ENCODE measurements at regions of chr4 and their contacts with region 1.

Region 1: DNA sequence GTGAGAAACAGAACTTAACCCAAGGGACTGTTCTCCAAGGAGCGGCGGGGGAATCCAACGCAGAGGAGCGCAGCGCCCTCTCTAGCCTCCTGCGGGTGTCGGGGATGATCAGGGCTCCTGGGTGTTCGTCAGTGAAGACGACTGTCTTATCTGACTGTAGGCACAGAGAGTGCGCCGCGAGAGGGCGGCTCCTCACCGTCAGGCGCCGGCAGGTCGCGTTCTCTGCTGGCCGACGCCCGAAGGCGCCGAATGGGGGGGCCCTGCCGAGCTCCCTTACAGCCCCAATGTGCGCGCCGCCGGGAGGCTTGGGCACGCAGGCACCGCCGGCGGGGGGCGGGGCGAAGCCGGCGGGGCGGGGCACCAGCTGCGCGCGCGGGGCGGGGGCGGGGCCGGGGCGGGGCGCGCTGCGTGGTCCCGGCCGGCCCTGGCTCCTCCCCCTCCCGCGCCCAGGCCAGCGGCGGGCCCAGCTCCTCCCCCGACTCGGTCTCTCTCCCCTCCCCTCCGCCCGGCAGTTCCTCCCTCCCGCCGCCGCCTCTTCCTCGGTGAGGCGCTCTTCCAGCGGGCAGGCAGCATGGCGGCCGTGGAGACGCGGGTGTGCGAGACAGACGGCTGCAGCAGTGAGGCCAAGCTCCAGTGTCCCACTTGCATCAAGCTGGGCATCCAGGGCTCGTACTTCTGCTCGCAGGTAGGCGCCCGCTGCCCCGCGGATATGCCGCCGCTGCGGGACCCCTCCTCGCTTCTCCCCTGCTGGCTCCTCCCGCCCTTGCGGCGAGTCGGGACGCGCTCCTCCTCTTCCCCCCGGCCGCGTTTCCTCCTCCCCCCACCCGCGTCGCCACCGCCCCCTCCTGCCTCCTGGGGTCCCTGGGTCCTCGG is at the start of gene METAP1:
- DNase-seq: peak; percentile 91
- H3K4me3 ChIP-seq: peak within 1 kb of the TSS; percentile 64 to 93 (median 73)
- H3K27ac ChIP-seq: peak within 1 kb of the TSS; percentile 44
- H3K4me1 ChIP-seq: peaks cover 6% of the 10 kb centered on the region
- H3K27me3 ChIP-seq: no peaks in the 10 kb centered on the region
- CTCF ChIP-seq: peak; percentile 39 to 68
- POLR2A ChIP-seq: peak; percentile 81
- total RNA-seq, gene METAP1: 38.8 and 39.8 TPM in 2 replicates

Region 2: DNA sequence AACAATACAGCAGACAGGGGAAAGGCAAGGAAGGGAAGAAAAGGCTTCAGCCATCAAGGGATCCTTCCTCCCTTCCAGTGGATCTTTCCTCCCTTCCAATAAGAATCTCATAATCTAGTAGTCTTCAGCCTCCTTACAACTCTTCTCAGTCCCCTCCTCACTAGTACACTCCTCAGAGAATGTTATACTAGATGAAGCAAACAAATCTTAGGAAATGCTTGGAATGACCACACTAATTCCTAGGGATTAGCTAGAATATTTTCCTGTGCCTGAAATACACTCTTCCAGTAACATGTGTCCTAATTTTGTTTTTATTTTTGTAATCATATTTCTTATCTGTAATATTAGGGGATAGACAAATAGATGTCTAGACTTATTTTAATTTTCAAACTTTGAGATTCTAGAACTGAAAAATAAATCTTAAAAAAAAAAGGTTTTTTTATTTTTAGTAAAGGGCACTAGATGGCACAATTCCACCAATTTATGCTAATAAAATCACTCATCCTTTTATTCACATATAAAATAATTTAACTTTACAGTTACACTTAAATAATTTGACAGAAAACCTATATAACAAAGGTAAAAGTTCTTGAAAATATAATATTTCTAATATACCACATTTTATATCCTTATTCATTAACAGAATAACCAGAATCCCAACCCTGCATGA is 845.2 kb before region 1 on chr4:
- CTCF ChIA-PET with region 1: interaction called, 3 read pairs
- POLR2A ChIA-PET with region 1: no interaction called
- dilution Hi-C with region 1: no loop called
- intact Hi-C with region 1: loop called (anchors 5 kb)
- DNase-seq: no peak
- H3K4me3 ChIP-seq: no peak overlapping the region
- H3K27ac ChIP-seq: no peak overlapping the region
- H3K4me1 ChIP-seq: peaks cover 6% of the 10 kb centered on the region
- H3K27me3 ChIP-seq: peaks cover 0 to 3% of the 10 kb centered on the region in 2 experiments
- CTCF ChIP-seq: no peak
- POLR2A ChIP-seq: no peak

Region 3: GRCh38 chr4:98612318-98613250 is 382.8 kb before region 1 on chr4:
- CTCF ChIA-PET with region 1: no interaction called
- POLR2A ChIA-PET with region 1: no interaction called
- dilution Hi-C with region 1: no loop called
- intact Hi-C with region 1: no loop called
- DNase-seq: no peak
- H3K4me3 ChIP-seq: no peak overlapping the region
- H3K27ac ChIP-seq: no peak overlapping the region
- H3K4me1 ChIP-seq: peaks cover 4% of the 10 kb centered on the region
- H3K27me3 ChIP-seq: no peaks in the 10 kb centered on the region
- CTCF ChIP-seq: no peak
- POLR2A ChIP-seq: no peak

Region 4: DNA sequence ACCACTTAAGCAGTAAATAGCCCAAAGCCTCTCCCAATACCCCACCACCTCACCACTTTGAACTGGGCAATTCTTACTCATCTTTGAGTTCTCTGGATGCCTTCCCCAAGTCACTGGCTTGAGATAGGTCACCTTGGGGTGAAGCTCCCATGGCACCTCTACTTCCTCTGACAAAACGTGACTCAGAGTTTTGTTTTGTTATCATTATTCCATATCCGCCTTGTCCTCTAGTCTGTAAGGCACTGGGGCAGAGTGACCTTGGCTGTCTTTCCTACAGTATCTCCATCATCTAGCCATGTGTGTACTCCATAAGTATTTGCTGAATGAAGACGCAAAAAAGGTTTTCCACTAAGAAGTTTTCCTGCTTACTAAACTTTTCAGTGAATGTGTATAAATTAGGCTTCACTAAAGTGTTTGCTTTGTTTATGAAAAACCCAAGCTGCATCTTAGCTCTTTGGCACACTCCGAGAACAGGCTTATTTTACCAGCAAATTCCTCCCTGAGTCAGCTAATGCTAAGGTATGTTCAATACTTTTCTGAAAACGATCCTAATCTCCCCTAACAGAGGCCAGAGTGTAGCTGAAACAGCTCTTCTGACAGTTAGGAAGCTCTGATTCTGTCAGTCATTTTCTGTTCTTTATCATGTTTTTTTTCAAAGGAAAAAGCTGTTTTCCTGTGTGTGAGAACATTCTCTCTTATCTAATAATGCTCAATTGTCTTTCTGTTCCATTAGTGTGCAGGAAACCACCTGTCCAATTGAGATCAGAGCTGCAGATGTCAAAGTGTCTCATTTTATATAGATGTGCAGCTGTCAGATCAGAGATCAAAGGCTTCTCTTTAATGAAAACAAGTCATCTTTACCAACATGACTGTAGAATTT is 306.8 kb before region 1 on chr4:
- CTCF ChIA-PET with region 1: interaction called, 6 read pairs
- POLR2A ChIA-PET with region 1: no interaction called
- dilution Hi-C with region 1: no loop called
- intact Hi-C with region 1: loop called (anchors 10 kb)
- DNase-seq: peak; percentile 90
- H3K4me3 ChIP-seq: peak overlapping the region in 1 of 3 experiments; percentile 34
- H3K27ac ChIP-seq: peak overlapping the region; percentile 85
- H3K4me1 ChIP-seq: peaks cover 59% of the 10 kb centered on the region
- H3K27me3 ChIP-seq: no peaks in the 10 kb centered on the region
- CTCF ChIP-seq: no peak
- POLR2A ChIP-seq: no peak

Region 5: DNA sequence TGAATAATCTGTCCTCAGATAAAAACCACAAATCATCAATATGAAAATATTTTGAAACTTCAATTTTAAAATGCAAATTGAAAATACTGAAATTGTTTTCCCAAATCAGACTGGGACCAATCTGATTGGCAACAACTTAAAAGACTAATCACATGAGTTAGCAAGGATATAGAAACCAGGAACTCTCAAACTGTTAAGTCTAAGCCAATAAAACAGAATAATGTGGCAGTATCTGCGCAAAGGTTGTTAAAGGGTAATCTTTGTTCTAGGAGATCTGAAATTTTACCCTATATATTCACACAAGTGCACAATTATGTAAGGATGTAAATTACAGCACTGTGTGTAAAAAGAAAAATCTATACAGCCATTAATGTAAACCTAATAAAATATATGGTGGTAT is 96.1 kb before region 1 on chr4:
- CTCF ChIA-PET with region 1: no interaction called
- POLR2A ChIA-PET with region 1: no interaction called
- dilution Hi-C with region 1: no loop called
- intact Hi-C with region 1: no loop called
- DNase-seq: no peak
- H3K4me3 ChIP-seq: no peak overlapping the region
- H3K27ac ChIP-seq: no peak overlapping the region
- H3K4me1 ChIP-seq: no peaks in the 10 kb centered on the region
- H3K27me3 ChIP-seq: no peaks in the 10 kb centered on the region
- CTCF ChIP-seq: no peak
- POLR2A ChIP-seq: no peak

Region 6: DNA sequence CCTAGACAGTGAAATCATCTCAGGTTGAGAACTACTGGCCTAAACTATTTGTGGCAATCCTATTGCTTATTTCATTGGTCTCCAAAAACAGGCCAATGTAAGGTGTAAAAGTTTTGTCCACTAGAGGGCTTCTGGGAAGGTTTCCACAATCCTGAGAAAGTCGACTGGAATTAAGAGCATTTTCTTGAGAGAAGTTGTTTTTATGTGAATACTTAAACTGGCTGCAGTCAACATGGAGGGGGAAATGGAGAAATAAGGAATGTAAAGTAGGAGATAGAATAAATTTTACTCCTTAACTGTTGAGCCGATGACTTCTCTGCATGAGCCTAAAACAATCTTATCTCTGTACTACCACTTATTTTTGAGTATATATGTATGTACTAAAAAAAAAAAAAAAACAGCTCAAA is 55.5 kb before region 1 on chr4:
- CTCF ChIA-PET with region 1: interaction called, 19 read pairs
- POLR2A ChIA-PET with region 1: no interaction called
- dilution Hi-C with region 1: no loop called
- intact Hi-C with region 1: loop called (anchors 2 kb)
- DNase-seq: peak; percentile 81
- H3K4me3 ChIP-seq: no peak overlapping the region
- H3K27ac ChIP-seq: no peak overlapping the region
- H3K4me1 ChIP-seq: peaks cover 3% of the 10 kb centered on the region
- H3K27me3 ChIP-seq: no peaks in the 10 kb centered on the region
- CTCF ChIP-seq: peak; percentile 58 to 64
- POLR2A ChIP-seq: no peak

Region 7: DNA sequence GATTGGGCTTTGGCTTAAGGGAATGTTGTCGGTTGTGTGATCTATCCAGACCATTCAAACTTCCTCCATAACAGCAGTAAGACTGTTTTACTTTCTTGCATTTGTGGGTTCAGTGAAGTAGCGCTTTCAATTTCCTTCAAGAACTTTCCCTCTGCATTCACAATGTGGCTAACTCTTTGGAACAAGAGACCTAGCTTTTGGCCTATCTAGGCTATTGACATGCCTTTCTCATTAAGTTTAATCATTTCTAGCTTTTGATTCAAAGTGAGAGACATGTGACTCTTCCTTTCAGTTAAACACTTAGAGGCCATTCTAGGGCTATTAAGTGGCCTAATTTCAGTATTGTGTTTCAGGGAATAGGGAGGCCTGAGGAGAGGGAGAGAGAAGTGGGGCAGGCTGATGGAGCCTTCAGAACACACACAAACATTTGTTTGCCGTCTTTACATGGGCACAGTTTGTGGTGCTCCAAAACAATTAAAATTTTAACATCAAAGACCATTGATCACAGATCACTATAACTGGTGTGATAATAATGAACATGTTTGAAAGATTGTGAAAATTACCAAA is 59.1 kb after region 1 on chr4:
- CTCF ChIA-PET with region 1: interaction called, 71 read pairs
- POLR2A ChIA-PET with region 1: no interaction called
- dilution Hi-C with region 1: no loop called
- intact Hi-C with region 1: loop called (anchors 1 kb)
- DNase-seq: no peak
- H3K4me3 ChIP-seq: no peak overlapping the region
- H3K27ac ChIP-seq: no peak overlapping the region
- H3K4me1 ChIP-seq: peaks cover 8% of the 10 kb centered on the region
- H3K27me3 ChIP-seq: no peaks in the 10 kb centered on the region
- CTCF ChIP-seq: no peak
- POLR2A ChIP-seq: no peak

Region 8: GRCh38 chr4:99067617-99068016 is 72.2 kb after region 1 on chr4:
- CTCF ChIA-PET with region 1: interaction called, 14 read pairs
- POLR2A ChIA-PET with region 1: no interaction called
- dilution Hi-C with region 1: no loop called
- intact Hi-C with region 1: no loop called
- DNase-seq: no peak
- H3K4me3 ChIP-seq: no peak overlapping the region
- H3K27ac ChIP-seq: no peak overlapping the region
- H3K4me1 ChIP-seq: no peaks in the 10 kb centered on the region
- H3K27me3 ChIP-seq: no peaks in the 10 kb centered on the region
- CTCF ChIP-seq: no peak
- POLR2A ChIP-seq: no peak

Region 9: DNA sequence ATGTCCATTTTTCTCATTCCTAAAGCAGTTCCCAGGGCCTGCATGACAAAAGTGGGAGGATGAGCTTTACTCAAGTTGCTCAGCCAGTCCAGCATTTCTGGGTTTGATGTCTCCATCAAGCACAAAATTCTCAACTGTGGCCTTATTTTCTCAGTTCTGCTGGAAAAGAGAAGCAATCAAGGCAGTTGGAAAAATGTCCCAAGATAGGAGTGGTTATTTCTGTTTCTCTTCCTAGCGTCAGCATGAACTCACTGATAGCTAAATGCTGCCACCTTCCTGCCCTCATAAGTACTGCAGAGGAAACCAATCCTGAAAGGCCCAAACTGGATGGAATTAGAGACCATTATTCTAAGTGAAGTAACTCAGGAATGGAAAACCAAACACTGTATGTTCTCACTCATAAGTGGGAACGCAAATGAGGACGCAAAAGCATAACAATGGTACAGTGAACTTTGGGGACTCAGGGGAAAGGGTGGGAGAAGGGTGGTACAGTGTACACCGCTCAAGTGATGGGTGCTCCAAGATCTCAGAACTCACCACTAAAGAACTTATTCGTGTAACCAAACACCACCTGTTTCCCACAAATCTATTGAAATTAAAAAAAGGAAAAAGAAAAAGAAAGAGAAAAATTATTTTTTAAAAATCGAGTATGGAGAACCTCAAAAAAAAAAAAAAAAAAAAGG is 410.2 kb after region 1 on chr4:
- CTCF ChIA-PET with region 1: interaction called, 4 read pairs
- POLR2A ChIA-PET with region 1: no interaction called
- dilution Hi-C with region 1: no loop called
- intact Hi-C with region 1: loop called (anchors 1 kb)
- DNase-seq: peak; percentile 70
- H3K4me3 ChIP-seq: no peak overlapping the region
- H3K27ac ChIP-seq: no peak overlapping the region
- H3K4me1 ChIP-seq: peaks cover 5% of the 10 kb centered on the region
- H3K27me3 ChIP-seq: peaks cover 4 to 15% of the 10 kb centered on the region in 2 experiments
- CTCF ChIP-seq: peak; percentile 75 to 78
- POLR2A ChIP-seq: no peak